Right ventricle myocardium inferior (tissue), 1 donor: ENCODE measurements at regions of chr11 and their contacts with region 1.

Region 1: GRCh38 chr11:74726547-74727182 is 4.6 kb downstream of the CHRDL2 start:
- DNase-seq: peak; percentile 78
- ATAC-seq: peak; percentile 82

Region 2: DNA sequence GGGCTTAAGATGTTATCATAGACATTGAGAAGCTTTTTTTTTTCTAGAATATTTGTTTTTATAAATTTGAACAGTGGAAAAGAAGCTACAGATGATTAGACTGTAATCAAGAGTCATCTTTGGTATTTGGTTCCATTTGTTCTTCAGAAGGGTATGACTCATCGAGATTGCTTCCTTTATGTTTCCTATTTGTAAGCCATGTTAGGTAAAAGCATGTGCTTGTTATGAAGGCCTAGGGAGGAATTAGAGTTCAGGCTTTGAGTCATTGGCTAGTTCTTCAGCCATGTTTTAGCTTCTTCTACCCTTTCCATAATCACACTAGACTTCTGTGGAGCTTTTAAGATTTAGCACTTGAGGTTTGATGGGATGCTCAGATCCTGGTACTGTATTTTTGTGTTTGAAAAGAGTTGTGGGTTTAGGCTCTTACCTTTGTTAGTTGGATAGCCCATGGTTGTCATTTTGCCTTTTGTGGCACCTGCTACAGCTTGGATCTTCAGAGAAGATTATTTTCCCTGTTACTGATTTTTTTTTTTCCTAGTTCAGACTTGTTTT is 90.0 kb before region 1 on chr11:
- intact Hi-C with region 1: loop called (anchors 5 kb)
- DNase-seq: no peak
- ATAC-seq: no peak

Region 3: GRCh38 chr11:74702383-74703007 is 24.2 kb before region 1 on chr11:
- intact Hi-C with region 1: loop called (anchors 2 kb)
- DNase-seq: peak; percentile 75
- ATAC-seq: peak; percentile 66